GM18951 (cell line): ENCODE measurements at regions of chr1 and their contacts with region 1.

Region 1: GRCh38 chr1:84433258-84434080 is 35.2 kb downstream of the DNASE2B start:
- POLR2A ChIP-seq: no peak

Region 2: DNA sequence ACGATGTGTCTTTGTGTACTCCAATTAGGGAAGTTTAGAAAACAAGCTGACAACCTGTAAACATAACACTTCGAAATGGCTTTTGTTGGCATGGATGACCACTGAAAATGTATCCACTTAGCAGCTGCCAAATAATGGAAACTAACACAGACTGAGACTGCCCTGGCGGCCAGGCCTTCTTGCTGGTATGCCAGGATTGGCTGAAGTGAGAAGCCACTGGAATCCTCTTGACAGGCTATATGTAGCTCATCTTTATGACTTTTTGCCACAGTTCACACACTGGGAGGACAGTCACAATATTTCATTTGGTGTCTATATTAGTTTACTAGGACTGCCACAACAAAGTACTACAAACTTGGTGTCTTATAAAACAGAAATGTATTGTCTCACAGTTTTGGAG is 153.6 kb after region 1 on chr1:
- in situ Hi-C with region 1: no loop called
- POLR2A ChIP-seq: no peak

Region 3: GRCh38 chr1:84620720-84621313 is 187.3 kb after region 1 on chr1:
- in situ Hi-C with region 1: loop called (anchors 10 kb)
- POLR2A ChIP-seq: no peak

Region 4: DNA sequence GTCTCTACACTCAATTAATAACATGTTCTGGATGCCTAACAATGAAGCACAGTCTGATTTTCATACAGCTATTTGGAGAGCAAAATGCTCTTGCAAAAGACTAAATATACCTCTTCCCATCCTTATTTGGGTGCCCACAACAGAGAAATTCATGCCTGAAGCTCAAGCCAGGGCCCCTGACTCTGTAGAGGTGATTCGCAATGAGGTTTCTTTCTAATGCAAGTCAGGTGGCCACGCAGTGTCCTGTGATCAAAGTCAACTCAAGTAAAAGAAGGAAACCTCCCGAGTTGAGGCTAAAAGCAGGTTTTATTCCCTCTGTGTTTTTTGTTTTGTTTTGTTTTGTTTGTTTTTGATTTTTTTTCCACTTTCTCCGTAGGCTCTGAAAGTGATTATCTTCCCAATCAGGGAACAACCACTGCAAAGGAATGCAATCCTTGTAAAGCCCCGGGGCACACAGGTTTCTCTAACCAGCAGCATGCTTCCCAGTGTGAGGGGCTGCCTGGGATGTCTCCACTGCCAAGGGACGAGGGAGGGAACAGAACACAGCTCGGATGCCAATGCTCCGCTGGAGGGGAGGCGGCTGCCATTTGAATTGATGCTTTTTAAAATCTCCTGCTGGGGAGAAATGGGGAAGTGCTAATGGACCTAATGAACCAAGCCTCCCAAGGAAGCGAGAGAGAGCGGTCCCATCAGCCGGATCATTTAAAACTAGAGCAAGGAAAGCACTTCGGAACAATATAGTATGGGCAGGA is 330.6 kb after region 1 on chr1:
- in situ Hi-C with region 1: loop called (anchors 10 kb)
- POLR2A ChIP-seq: no peak